Endothelial cell of umbilical vein (primary cell): ENCODE measurements at regions of chr5 and their contacts with region 1.

Region 1: DNA sequence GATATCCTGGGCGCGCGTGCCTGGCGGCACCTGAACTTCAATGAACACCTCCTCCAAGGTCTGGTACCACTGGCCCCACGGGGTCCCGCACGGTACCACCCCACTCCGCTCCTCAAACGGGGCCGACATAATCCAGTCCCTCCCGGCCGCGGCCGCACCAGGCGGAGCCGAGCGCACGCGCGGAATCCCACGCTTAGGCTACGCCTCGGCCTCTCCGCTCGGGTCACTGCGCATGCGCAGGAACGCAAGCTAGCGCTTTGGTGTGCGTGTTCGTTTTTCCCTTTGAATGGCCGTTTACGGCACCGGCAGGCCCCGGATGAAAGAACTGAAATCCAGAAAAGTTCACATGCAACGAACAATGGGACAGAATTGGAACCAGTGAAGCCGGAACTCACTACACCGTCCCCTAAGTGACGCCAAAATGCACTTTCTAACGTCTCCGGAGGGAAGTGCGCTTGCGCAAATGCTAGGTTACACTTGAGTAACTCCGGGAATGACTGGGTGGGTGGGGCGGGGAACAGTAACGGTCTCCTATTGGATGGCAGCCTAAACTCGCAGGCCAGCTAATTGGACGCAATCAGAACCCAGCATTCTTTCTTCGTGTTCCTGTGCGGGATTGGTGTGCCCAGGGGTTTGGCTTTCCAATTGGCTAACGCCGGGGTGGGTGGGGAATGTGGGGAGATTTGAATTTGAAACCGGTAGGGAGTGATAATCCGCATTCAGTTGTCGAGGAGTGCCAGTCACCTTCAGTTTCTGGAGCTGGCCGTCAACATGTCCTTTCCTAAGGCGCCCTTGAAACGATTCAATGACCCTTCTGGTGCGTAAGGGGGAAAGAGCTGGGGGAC is at the starts of genes HMMR and NUDCD2:
- DNase-seq: peak; percentile 99
- H3K4me3 ChIP-seq: peak within 1 kb of the TSS; percentile 85 to 96 (median 92)
- H3K27ac ChIP-seq: peak within 1 kb of the TSS; percentile 99
- H3K4me1 ChIP-seq: peaks cover 21% of the 10 kb centered on the region
- H3K27me3 ChIP-seq: no peaks in the 10 kb centered on the region
- CTCF ChIP-seq: peak in 1 of 2 donors; percentile 11
- POLR2A ChIP-seq: peak; percentile 95
- total RNA-seq, gene HMMR: 26.0 and 31.0 TPM in 2 replicates
- total RNA-seq, gene NUDCD2: 46.9 and 50.3 TPM in 2 replicates

Region 2: DNA sequence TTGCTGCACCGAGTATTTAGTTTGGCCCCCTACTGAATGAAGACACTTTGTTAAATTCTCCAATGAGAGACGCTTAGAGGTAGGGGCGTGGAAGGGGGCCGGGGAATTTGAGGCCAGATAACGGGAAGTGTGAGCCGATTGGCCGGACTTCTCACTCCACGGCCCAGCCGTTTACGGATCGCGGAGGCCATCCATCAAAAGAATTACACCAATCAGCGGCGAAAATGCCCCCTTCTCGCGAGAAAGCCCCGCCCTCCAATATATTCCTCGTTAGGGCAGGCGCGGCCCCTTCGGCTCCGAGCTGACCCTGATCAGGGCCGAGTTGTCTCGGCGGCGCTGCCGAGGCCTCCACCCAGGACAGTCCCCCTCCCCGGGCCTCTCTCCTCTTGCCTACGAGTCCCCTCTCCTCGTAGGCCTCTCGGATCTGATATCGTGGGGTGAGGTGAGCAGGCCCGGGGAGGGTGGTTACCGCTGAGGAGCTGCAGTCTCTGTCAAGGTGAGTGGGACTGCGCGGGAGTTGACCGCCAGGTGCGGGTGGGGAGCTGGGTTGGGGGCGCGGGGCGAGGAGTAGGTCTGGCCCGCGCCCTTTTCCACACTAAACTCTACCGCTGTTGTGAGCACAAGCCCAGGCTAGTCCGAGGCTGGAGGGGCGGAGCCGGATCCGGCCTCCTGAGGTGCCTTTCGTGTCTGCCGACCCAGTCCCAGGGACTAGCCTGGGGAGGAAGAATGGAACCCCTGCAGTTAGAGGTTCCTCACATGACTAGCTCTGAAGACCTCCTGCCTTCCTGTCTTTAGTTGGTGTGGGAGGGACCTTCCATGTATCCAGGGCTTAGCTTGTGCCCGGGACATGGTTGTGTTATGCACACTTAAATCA is 22.6 kb before region 1 on chr5 and contains the start of gene CCNG1:
- CTCF ChIA-PET with region 1: interaction called, 10 read pairs
- POLR2A ChIA-PET with region 1: interaction called, 34 read pairs
- dilution Hi-C with region 1: no loop called
- intact Hi-C with region 1: loop called (anchors 1 kb)
- DNase-seq: peak; percentile 97
- H3K4me3 ChIP-seq: peak within 1 kb of the TSS; percentile 90 to 99 (median 92)
- H3K27ac ChIP-seq: peak within 1 kb of the TSS; percentile 77
- H3K4me1 ChIP-seq: peaks cover 19% of the 10 kb centered on the region
- H3K27me3 ChIP-seq: peaks cover 0 to 4% of the 10 kb centered on the region in 2 experiments
- CTCF ChIP-seq: no peak
- POLR2A ChIP-seq: peak; percentile 96
- total RNA-seq, gene CCNG1: 164 and 186 TPM in 2 replicates

Region 3: GRCh38 chr5:163534492-163535094 is 74.4 kb after region 1 on chr5:
- CTCF ChIA-PET with region 1: no interaction called
- POLR2A ChIA-PET with region 1: no interaction called
- dilution Hi-C with region 1: no loop called
- intact Hi-C with region 1: no loop called
- DNase-seq: no peak
- H3K4me3 ChIP-seq: no peak overlapping the region
- H3K27ac ChIP-seq: no peak overlapping the region
- H3K4me1 ChIP-seq: no peaks in the 10 kb centered on the region
- H3K27me3 ChIP-seq: peaks cover 2 to 9% of the 10 kb centered on the region in 2 experiments
- CTCF ChIP-seq: no peak
- POLR2A ChIP-seq: no peak